Heart right ventricle (tissue), 16 donors: ENCODE measurements at regions of chr19 and their contacts with region 1.

Region 1: DNA sequence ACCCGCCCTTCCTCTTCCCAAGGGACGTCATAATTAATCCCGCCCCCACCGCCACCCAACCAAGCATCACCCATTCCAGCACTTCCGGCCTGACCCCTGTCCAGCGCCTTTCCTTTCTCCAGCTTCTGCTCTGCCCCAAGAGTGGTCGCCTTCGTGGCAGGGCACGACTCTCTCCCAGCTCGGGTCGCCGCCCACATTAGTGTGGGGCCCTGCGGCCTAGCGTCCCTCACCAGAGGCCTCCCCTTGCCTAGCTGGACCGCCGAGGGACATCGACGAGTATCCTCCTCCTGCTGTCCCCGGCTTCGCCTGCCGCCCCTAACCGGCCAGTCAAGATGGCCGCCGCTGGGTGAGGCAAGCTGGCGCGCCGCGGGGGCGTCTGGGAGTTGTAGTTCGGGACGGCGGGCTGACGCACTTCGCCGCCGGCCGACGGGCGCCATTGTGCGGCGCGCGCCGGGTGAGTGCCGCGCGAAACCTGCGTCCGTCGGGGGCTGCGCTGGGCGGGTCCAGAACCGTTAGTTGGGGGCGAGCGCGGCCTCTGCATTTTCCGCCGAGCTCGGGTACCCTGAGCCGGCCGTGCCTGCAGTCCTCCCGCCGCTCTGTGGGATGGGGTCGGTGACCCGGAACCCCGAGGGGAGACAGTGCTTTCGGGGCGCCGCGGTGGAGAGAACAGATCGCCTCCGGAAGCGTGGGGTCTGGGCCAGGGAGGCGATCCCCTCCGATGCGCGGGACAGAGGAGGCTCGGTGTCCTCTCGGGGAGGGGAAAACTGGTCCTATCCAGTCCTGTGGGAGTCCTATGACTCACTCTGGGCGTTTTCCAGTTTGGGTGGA is at the start of gene ZNF274:
- DNase-seq: peak; percentile 95
- ATAC-seq: peak; percentile 95 to 97 (median 96)
- H3K4me3 ChIP-seq: peak within 1 kb of the TSS; percentile 67 to 98 (median 92)
- H3K27ac ChIP-seq: peak within 1 kb of the TSS; percentile 96 to 100 (median 100)
- H3K4me1 ChIP-seq: peaks cover 0 to 17% (median 6%) of the 10 kb centered on the region in 9 donors
- H3K27me3 ChIP-seq: no peaks in the 10 kb centered on the region
- CTCF ChIP-seq: no peak
- total RNA-seq, gene ZNF274: 18.4 to 27.6 (median 22.9) TPM

Region 2: GRCh38 chr19:58228585-58229254 is 45.5 kb after region 1 on chr19 and contains the start of gene ZNF544:
- intact Hi-C with region 1: loop called in 1 of 10 experiments (anchors 2 kb)
- DNase-seq: peak; percentile 75 to 80
- ATAC-seq: peak; percentile 95 to 99 (median 97)
- H3K4me3 ChIP-seq: peak within 1 kb of the TSS; percentile 60 to 94 (median 82)
- H3K27ac ChIP-seq: peak within 1 kb of the TSS; percentile 42 to 95 (median 88)
- H3K4me1 ChIP-seq: peaks cover 5 to 23% (median 17%) of the 10 kb centered on the region in 9 donors
- H3K27me3 ChIP-seq: no peaks in the 10 kb centered on the region
- CTCF ChIP-seq: peak in 1 of 9 donors; percentile 25
- total RNA-seq, gene ZNF544: 19.2 to 35.0 (median 23.7) TPM

Region 3: DNA sequence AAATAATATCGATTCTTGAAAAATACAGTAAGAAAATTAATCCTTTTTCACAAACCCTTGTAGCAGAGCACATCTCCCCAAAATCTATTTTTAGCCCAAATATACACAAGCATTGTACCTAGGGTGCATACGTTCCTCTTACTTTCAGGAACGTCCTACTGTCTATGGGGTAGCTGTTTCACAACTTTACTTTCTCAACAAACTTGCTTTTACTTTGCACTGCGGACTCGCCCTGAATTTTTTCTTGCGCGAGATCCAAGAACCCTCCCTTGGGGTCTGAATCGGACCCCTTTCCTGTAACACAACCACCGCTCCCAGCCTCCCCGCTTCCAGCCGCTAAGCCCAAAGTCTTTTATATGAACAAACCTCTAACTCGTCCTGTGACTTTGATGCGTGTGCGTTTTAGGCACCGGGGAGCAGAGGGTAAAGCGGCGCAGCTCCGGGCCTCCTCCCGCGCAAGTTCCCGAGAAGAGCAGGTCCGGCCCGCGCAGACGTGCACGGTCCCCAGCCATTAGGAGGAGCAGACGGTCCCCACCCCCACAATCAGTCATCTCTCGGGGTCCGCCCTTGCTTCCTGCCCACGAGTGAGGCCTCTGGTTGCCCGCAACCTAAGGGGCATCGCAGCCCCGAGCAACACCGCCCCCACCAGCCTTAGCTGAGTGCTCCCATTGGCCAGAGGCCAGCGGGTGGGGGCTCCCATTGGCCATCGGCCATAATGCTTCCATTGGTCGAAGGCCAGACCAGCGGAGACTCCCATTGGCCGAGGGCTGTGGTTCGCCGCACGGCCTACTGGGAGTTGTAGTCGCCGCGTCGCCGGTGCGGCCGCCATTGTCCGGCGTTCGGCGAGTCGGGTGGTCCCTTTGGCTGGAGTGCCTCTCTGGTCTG is 95.2 kb after region 1 on chr19 and contains the start of gene ZNF8:
- intact Hi-C with region 1: loop called in 2 of 10 experiments (anchors 10 kb)
- DNase-seq: peak; percentile 98
- ATAC-seq: peak; percentile 95 to 98 (median 96)
- H3K4me3 ChIP-seq: peak within 1 kb of the TSS; percentile 58 to 98 (median 88)
- H3K27ac ChIP-seq: peak within 1 kb of the TSS; percentile 74 to 98 (median 96)
- H3K4me1 ChIP-seq: peaks cover 4 to 29% (median 20%) of the 10 kb centered on the region in 9 donors
- H3K27me3 ChIP-seq: no peaks in the 10 kb centered on the region
- CTCF ChIP-seq: peak in 4 of 9 donors; percentile 19 to 38 (median 32)
- total RNA-seq, gene ZNF8: 4.4 to 6.2 (median 5.6) TPM

Region 4: DNA sequence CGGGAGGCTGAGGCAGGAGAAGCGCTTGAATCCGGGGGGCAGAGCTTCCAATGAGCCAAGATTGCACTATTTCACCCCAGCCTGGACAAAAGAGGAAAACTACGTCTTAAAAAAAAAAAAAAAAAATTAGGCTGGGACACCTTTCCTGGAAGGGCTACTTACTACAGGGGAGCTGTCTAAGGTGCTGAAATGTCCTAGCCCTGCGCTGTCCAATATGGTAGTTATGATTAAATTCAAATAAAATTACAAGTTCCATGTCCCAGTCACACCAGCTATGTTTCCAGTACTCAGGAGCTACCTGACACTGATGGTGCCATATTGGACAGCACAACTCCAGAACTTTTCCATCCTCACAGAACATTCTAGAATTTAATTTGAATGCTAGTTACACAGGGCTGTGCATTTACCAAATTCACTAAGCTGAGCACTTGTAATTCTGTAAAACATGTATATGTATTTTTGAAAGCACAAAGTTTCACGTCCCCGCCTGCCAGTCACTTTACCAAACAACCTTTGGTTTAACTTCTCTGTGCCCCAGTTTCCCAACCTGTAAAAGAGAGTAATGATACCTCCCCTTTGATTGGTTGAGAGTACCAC is 134.4 kb after region 1 on chr19:
- intact Hi-C with region 1: loop called in 1 of 10 experiments (anchors 10 kb)
- DNase-seq: no peak
- ATAC-seq: peak in 1 of 8 donors; percentile 31
- H3K4me3 ChIP-seq: no peak overlapping the region
- H3K27ac ChIP-seq: no peak overlapping the region
- H3K4me1 ChIP-seq: no peaks in the 10 kb centered on the region
- H3K27me3 ChIP-seq: no peaks in the 10 kb centered on the region
- CTCF ChIP-seq: no peak

Region 5: DNA sequence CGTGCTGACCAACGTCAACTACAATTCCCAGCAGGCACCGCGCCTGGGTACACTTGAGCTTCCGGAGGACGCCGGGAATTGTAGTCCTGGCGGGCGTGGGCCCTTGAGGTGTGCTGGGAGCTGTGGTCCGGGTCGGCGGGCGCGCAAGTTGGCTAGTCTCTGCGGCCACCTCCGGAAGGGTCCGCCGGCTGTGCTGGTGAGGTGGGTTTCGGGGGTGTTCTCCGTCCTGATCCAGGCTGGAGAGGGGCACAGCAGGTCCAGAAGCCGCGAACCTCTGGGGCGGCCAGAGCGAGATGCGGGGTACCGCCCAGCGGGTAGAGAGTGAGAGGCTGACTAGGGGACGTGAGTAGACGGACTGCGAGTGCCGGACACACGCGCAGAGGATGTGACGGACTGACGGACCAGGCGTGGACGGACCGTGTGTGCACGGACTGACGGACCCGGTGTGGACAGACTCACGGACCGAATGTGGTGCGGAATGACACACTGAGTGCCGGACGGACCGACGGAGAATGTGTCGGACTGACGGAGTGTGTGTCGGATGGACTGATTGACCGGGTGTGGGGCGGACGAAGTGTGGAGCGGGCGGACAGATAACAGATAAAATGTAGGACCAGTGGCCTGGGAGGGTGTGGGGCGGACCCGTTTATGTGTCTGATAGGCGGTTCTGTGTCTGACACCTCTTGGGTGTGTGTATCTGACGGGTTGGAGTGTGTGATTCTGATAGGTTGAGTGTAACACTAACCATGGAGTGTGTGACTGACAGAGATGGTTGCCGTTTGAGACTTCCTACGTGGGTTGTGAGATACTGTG is 143.9 kb after region 1 on chr19 and contains the start of gene ZSCAN22:
- intact Hi-C with region 1: loop called in 1 of 10 experiments (anchors 5 kb)
- DNase-seq: peak; percentile 96 to 98
- ATAC-seq: peak; percentile 98 to 99 (median 98)
- H3K4me3 ChIP-seq: peak within 1 kb of the TSS; percentile 52 to 79 (median 71)
- H3K27ac ChIP-seq: peak within 1 kb of the TSS; percentile 81 to 96 (median 92)
- H3K4me1 ChIP-seq: peaks cover 10 to 33% (median 26%) of the 10 kb centered on the region in 9 donors
- H3K27me3 ChIP-seq: no peaks in the 10 kb centered on the region
- CTCF ChIP-seq: no peak
- total RNA-seq, gene ZSCAN22: 1.2 to 2.1 (median 1.4) TPM